ENCODE measurements at regions of chr2 and their contacts with region 1.

Region 1: DNA sequence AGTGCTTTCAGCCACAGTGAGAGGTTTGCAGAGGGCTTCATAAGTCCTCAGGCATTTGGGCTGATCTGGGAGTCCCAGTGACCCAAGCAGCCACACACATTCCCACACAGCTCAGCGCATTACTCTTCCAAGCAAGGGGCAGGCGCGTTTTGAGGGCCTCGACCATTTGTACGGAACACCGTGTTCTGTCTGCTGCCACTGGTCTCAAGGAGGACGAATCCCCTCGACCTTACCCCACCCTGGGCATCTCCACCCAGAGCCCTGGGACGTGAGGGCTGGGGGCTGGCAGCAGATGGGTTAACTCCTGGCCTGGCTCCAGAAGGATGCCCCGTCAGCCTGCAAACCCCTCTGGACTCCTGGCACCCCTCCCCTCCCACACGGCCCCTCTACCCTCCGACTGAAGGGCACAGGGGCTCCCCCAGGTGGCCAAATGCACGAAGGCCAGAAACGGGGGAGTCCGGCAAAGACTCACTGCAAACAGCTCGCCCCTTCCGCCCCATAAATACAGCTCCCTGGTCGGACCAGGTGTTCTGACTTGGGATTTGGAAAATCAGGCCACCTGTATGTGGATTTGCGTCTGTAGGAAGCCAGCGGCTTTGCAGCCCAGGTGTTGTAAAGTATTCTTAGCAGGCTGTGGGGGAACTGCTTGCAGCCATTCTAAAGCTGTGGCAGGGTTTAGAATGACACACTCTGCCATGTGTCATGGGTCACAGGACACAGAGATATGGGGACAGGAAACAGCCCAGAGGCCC is 33.6 kb upstream of the PTMA start:
- DNase-seq: peak; percentile 74 to 95 (median 92)
- H3K4me3 ChIP-seq: peak overlapping the region in 3 of 7 experiments; percentile 10 to 35 (median 29)
- H3K27ac ChIP-seq: peak overlapping the region in 1 of 2 experiments; percentile 6
- H3K4me1 ChIP-seq: peaks cover 0 to 66% (median 45%) of the 10 kb centered on the region in 4 experiments
- H3K27me3 ChIP-seq: no peaks in the 10 kb centered on the region

Region 2: DNA sequence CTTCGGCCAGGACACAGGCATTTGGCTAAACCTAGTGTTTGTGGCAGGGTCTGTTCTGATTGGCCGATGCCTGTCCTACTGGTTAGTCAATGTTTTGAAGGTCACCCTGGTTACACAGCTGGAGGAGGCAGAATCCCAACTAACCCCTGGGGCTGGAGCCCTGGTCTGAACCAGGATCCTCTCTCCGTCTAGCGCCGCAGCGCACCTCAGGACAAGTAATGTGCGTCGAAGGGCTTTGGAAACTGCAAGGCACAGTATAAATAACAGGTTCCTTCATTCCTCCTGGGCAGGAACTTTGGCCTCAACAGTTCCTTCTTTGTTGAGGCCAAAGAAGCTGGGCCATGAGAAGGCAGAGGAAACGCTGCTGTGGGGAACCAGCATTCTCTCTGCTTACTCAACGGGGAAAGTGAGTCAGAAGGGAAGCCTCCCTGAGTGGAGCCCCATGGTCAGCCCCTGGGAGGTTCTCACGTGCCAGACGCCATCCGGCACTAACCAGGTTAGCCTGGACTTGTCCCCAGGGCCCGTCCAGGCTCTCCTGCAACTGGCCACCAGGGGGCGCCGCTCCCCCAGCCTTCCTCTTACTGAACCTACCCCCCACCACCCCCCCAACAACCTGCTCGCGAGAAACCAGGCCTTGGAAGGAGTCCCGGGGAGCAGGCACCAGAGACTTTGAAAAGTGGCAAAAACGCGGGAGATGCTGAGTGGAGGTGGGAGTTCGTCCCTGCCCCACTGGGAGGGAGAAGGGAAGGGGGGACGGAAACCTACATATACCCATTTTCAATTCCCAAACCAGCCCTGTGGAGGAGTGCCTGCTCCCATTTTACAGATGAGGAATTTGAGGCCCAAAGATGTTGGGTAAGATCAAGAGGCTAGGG is 62.3 kb before region 1 on chr2:
- CTCF ChIA-PET with region 1: interaction called, 318 read pairs
- POLR2A ChIA-PET with region 1: interaction called, 10 read pairs
- DNase-seq: peak; percentile 89 to 94 (median 93)
- H3K4me3 ChIP-seq: peak overlapping the region in 2 of 7 experiments; percentile 68 to 78
- H3K27ac ChIP-seq: peak overlapping the region; percentile 94 to 96
- H3K4me1 ChIP-seq: peaks cover 3 to 63% (median 55%) of the 10 kb centered on the region in 4 experiments
- H3K27me3 ChIP-seq: no peaks in the 10 kb centered on the region

Region 3: DNA sequence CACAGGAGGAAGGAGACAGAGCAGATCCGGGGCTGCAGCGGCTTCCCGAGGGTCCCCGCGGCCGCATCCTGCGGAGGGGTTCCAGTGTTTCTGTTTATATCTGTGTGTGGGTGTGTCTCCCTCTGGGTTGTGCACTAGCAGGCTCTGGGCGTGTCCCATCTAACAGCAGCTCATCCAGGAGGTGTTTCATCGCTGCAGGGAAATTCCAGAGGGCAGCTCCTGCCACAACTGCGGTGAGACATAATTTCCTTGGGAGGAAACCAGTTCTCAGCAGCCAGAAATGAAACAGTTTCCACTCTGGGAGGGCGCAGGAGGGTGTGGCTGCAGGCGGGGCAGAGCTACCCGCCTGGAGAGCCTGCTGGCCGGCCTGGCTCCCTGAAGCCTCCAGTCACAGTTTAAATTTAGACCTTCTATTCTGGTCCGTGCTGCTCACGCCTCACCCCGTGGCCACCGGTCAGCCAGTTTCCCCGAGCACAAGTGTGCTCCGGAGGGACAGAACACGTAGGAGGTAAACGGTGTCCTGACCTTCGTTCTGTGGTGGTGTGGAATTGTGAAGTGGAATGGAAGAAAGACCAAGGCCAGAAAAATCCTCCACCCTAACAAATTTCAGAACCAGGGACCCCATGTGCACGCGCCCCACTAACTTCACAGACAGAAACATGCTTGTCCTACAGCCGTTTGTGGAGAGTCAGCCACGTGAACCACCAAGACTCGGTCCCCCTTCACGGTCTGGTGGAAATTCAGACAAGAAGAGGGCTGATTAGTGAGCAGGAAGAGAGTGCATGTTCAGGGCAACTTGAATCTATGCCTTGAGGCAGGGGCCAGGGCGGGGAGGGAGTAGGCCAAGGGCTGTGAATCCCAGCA is 31.9 kb before region 1 on chr2:
- CTCF ChIA-PET with region 1: interaction called, 175 read pairs
- POLR2A ChIA-PET with region 1: interaction called, 4 read pairs
- DNase-seq: peak; percentile 65 to 77 (median 76)
- H3K4me3 ChIP-seq: peak overlapping the region in 6 of 7 experiments; percentile 4 to 77 (median 60)
- H3K27ac ChIP-seq: peak overlapping the region; percentile 40 to 57
- H3K4me1 ChIP-seq: peaks cover 0 to 53% (median 33%) of the 10 kb centered on the region in 4 experiments
- H3K27me3 ChIP-seq: no peaks in the 10 kb centered on the region

Region 4: DNA sequence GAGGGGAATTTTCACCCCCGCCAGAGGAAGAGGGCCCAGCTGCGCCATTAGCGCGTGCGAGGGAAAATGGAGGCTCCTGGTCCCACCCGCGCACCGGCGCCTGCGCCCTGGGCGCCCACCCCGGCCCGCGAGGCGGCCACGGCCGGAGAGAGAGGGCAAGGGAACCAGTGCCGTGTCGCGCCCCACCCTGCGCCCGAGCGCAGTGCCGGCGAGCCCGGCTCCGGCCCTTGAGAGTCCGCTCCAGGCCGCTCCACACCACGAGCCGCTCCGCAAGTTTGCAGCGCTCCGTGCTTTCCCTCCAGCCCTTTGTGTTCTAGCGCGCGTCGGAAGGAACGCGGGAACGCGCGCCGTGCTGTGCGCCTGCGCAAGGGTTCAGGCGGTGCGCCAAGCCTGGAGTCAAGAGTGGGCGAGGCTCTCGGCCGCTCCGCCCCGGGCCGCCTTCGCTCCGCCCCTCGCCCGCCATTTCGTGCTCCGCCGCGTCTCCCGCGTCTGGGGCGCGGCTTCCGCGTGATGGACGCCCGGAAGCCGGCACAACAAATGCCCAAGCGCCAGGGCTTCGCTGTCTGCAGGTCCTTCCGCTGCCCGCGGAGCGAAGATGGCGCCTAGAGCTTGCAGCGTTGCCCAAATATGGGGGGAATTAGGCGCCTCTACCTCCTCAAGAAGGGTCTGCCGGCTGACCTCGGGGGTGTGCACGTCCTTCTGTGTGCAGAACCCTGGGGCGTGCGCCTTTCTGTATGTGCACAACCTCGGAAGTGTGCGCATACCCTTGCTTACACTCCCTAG is 12.5 kb before region 1 on chr2:
- CTCF ChIA-PET with region 1: interaction called, 133 read pairs
- POLR2A ChIA-PET with region 1: interaction called, 5 read pairs
- DNase-seq: peak; percentile 96 to 98 (median 98)
- H3K4me3 ChIP-seq: peak overlapping the region; percentile 13 to 75 (median 51)
- H3K27ac ChIP-seq: peak overlapping the region in 1 of 2 experiments; percentile 81
- H3K4me1 ChIP-seq: peaks cover 5 to 55% (median 47%) of the 10 kb centered on the region in 4 experiments
- H3K27me3 ChIP-seq: no peaks in the 10 kb centered on the region

Region 5: DNA sequence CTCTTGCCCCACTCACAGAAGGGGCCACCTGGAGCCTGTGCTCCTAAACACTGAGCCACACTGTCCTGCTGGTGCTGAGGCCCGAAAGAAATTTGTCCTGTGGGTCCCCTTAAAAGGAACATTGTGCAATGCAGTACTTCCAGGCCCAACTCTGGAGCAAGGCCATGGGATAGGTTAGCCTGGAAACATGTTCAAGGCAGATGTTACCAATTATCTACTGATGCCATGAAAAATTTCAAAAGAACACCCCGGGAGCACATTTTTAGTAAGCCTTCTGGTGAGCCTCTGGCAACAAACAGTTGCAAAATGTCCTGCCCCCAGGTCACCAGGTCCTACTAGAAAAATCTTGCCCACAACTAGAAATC is 21.2 kb after region 1 on chr2:
- CTCF ChIA-PET with region 1: interaction called, 107 read pairs
- POLR2A ChIA-PET with region 1: no interaction called
- DNase-seq: no peak
- H3K4me3 ChIP-seq: no peak overlapping the region
- H3K27ac ChIP-seq: no peak overlapping the region
- H3K4me1 ChIP-seq: peaks cover 0 to 11% (median 5%) of the 10 kb centered on the region in 4 experiments
- H3K27me3 ChIP-seq: no peaks in the 10 kb centered on the region

Region 6: GRCh38 chr2:231706731-231707624 is 32.2 kb after region 1 on chr2:
- CTCF ChIA-PET with region 1: interaction called, 417 read pairs
- POLR2A ChIA-PET with region 1: interaction called, 11 read pairs
- DNase-seq: peak; percentile 97 to 99 (median 99)
- H3K4me3 ChIP-seq: peak overlapping the region; percentile 74 to 97 (median 86)
- H3K27ac ChIP-seq: peak overlapping the region; percentile 100
- H3K4me1 ChIP-seq: peaks cover 8 to 37% (median 31%) of the 10 kb centered on the region in 4 experiments
- H3K27me3 ChIP-seq: no peaks in the 10 kb centered on the region

Measured in common myeloid progenitor, CD34-positive (primary cell).